ENCODE measurements at regions of chr12 and their contacts with region 1.

Region 1: DNA sequence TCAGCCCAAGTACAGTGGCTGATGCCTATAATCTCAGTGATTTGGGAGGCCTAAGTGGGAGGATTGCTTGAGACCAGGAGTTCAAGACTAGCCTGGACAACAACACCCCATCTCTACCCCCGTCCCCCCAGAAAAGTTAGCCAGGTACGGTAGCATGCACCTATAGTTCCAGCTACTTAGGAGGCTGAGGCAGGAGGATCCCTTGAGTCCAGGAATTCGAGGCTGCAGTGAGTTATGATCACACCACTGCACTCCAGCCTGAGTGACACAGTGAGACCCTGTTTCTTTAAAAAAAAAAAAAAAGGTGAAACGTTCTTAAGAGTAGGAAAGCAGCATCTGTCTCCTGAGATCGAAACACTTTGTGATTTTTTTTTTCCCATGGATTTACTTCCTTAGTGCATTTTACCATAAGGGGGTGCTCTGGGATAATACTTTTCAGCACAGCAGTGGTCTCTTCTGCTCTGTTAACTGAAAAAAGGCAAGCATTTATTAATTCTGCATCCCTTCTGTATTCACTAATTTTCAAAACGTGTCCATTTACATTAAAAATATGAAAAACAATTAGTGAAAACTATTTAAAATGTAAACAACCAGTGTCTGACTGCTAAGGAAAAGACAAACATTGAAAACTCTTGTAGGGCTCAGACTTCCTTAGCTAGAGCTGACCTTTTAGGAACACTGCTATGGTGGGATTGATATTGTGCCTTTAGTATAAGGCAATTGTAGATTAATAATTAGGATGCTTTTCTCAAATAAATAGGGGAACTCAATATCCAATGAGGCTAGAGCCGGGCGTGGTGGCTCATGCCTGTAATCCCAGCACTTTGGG is 31.2 kb upstream of the USP44 start:
- DNase-seq: peak; percentile 41 to 75
- ATAC-seq: peak; percentile 91 to 95
- H3K4me3 ChIP-seq: no peak overlapping the region
- H3K27ac ChIP-seq: peak overlapping the region; percentile 43 to 73; a peak in 5 of 6 replicates
- H3K4me1 ChIP-seq: peaks cover 9% of the 10 kb centered on the region
- CTCF ChIP-seq: peak; percentile 93
- EP300 ChIP-seq: no peak
- POLR2A ChIP-seq: no peak
- RAD21 ChIP-seq: peak; percentile 96 to 97

Region 2: GRCh38 chr12:95548539-95549391 is 33.7 kb before region 1 on chr12:
- CTCF ChIA-PET with region 1: no interaction called
- POLR2A ChIA-PET with region 1: no interaction called
- DNase-seq: peak; percentile 51 to 55
- ATAC-seq: peak; percentile 87 to 90
- H3K4me3 ChIP-seq: peak overlapping the region; percentile 88
- H3K27ac ChIP-seq: peak overlapping the region; percentile 78 to 89
- H3K4me1 ChIP-seq: no peaks in the 10 kb centered on the region
- CTCF ChIP-seq: no peak
- EP300 ChIP-seq: no peak
- POLR2A ChIP-seq: peak; percentile 42
- RAD21 ChIP-seq: no peak

Region 3: DNA sequence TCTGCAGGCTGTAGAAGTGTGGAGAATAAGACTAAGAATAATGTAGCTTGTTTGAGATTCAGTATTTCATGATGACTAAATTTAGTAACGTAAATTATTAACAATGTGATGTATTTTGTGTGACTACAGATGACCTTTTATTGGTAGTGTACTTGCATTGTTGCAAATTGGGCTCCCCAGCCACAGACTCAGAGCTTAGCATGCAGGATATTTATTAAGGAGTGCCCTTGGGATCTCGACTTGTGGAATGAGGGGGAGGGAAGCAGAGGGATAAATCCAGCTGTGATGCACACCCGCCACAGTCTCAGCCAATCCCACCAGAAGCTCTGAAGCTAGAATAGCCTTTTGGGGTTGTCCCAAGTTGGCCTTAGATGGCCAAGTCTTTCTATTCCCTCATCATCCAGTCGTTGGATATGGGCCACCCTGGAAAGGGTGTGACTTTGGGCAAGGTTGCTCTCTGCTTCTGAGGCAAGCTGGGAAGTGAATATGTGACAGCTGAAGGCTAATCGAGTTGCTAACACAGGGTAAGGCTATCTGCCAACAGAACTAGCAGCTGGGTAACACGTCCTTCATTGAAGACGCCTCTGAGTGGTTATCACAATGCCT is 10.9 kb after region 1 on chr12:
- CTCF ChIA-PET with region 1: interaction called, 24 read pairs
- POLR2A ChIA-PET with region 1: no interaction called
- DNase-seq: peak in 1 of 2 experiments; percentile 60
- ATAC-seq: peak; percentile 50 to 75
- H3K4me3 ChIP-seq: no peak overlapping the region
- H3K27ac ChIP-seq: peak overlapping the region; percentile 1 to 72; a peak in 3 of 6 replicates
- H3K4me1 ChIP-seq: peaks cover 17% of the 10 kb centered on the region
- CTCF ChIP-seq: no peak
- EP300 ChIP-seq: no peak
- POLR2A ChIP-seq: no peak
- RAD21 ChIP-seq: no peak

Region 4: DNA sequence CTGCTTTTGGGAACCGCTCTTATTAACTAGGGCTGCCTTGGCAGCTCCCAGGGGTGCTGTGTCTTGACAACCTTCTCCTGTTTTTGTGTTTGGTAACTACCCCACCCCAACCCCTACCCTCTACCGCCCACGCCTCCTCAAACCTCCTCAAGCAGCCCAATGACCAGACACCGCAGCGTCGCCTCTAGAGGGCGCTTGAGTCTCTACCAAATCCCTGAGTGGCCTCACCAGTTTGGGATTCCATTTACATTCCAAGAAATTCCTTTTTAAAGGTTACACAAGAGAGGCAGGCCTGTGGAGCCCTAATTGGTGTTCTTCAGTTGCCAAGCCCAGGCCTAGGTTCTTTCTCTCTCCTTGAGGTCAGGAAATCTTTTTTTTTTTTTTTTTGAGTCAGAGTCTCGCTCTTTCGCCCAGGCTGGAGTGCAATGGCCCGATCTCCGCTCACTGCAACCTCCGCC is 41.2 kb after region 1 on chr12:
- CTCF ChIA-PET with region 1: interaction called, 14 read pairs
- POLR2A ChIA-PET with region 1: no interaction called
- DNase-seq: peak; percentile 82 to 95
- ATAC-seq: peak; percentile 91 to 95
- H3K4me3 ChIP-seq: no peak overlapping the region
- H3K27ac ChIP-seq: peak overlapping the region; percentile 63 to 84
- H3K4me1 ChIP-seq: peaks cover 24% of the 10 kb centered on the region
- CTCF ChIP-seq: peak; percentile 74
- EP300 ChIP-seq: no peak
- POLR2A ChIP-seq: no peak
- RAD21 ChIP-seq: peak; percentile 89 to 92

Region 5: DNA sequence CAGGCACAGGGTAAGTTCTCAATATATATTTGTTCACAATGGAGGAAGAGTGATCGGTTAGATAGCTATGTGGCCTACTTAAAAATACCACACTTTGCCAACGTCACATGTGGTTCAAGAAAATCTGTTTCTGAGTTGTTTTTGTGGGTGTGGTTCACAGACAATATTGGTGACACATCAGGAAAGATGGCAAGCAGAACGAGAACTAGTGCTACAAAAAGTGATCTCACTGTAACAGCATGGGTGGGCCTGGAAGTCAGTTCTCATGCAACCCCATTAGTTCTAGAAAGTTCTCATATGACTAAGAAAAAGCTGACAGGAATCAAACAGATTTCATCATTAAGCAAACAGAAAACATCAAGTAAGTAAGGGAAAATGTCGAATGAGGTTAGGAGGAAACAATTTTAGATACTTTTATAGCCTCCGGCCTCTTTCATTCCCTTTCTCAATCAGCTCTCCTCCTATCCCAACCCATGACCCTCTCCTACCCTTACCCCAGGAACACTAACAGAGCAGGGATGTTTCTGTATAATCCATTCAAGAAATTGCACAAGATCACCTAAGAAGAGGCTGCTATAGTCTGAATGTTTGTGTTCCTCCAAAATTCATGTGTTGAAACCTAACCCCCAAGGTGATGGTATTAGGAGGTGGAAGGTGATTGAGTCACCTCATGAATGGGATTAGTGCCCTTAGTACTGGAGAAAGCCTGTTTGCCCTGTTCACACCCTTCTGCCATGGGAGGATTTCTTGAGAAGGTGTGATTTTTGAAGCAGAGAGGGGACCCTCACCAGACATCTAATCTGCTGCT is 223.6 kb after region 1 on chr12:
- CTCF ChIA-PET with region 1: interaction called, 18 read pairs
- POLR2A ChIA-PET with region 1: interaction called, 3 read pairs
- DNase-seq: peak; percentile 89 to 100
- ATAC-seq: peak; percentile 88 to 93
- H3K4me3 ChIP-seq: no peak overlapping the region
- H3K27ac ChIP-seq: peak overlapping the region; percentile 90 to 98
- H3K4me1 ChIP-seq: peaks cover 62% of the 10 kb centered on the region
- CTCF ChIP-seq: no peak
- EP300 ChIP-seq: peak; percentile 100
- POLR2A ChIP-seq: no peak
- RAD21 ChIP-seq: peak in 1 of 2 experiments; percentile 28; a peak in 4 of 5 replicates